Activated CD8-positive, alpha-beta T cell treated with anti-CD3 and anti-CD28 coated beads, Interleukin-2, amount 10 ng/mL, durations not matched to agents 7 days and 5 days (primary cell): ENCODE measurements at regions of chr4 and their contacts with region 1.

Region 1: DNA sequence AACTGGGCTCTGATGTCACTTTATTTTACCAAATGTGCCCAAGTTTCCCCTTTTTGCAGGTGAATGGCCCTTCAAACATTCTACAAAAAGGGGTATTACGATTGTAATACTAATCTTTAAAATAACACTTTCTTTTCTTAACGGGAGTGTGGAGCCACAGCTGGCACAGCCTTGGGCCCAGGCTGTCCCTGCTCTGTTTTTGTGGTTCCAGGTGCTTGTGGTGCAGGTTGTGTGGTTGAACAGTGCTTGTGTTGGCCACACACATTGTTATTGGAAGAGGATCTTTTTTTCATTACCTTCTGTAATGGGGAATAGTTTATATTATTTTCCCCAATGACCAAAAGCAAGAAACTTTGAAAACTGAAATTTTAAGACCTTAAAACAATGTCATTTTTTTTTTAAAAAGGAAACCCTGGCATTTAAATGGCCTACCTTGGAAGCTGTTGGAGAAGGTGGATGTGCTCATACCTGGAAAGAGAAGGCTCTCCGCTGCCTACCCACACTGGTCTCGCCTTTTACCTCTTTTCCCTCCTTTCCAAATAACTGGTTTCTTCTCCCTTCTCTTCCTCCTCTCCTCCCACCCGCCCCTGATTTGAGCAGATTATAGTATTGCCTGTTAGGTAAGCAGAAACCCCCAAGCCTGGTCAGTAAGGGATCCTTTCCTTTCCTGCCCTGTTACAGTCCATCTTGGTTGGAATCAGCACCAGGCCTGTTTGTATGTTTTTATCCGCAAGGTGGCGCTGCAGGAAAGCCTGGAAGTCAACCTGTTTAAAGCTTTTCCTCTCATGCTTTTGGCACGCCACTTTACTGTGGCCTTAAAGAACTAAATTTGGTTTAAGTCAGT is 28.6 kb downstream of the HADH start:
- DNase-seq: peak; percentile 90
- ATAC-seq: peak; percentile 68
- H3K4me3 Mint-ChIP-seq: no peak overlapping the region
- H3K27ac Mint-ChIP-seq: peak overlapping the region; percentile 58
- H3K4me1 Mint-ChIP-seq: peaks cover 33% of the 10 kb centered on the region
- H3K27me3 Mint-ChIP-seq: no peaks in the 10 kb centered on the region

Region 2: GRCh38 chr4:107939307-107939706 is 79.0 kb before region 1 on chr4:
- CTCF ChIA-PET with region 1: no interaction called
- POLR2A ChIA-PET with region 1: no interaction called
- DNase-seq: no peak
- ATAC-seq: no peak
- H3K4me3 Mint-ChIP-seq: no peak overlapping the region
- H3K27ac Mint-ChIP-seq: no peak overlapping the region
- H3K4me1 Mint-ChIP-seq: peaks cover 7% of the 10 kb centered on the region
- H3K27me3 Mint-ChIP-seq: no peaks in the 10 kb centered on the region

Region 3: DNA sequence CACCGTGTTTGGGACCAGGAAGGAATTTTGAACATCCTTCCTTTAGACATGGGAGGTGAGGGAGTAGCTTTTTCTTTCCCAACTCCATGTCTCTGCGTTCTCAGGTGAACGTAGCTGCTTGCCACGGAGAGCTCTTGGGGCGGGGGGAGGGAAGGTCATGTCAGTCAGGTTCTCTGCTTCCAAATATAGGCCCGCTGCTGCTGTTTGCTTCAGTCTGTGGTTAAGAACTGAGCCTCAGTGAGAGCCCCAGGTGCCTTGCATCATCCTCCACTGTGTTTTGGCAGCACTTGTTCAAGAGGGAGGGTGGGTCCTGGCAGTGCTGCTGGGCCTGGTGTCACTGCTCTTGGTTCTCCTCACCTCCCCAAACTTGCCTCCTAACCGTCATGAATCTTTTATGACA is 18.0 kb after region 1 on chr4:
- CTCF ChIA-PET with region 1: interaction called, 72 read pairs
- POLR2A ChIA-PET with region 1: interaction called, 4 read pairs
- DNase-seq: peak; percentile 84
- ATAC-seq: peak; percentile 92
- H3K4me3 Mint-ChIP-seq: peak overlapping the region; percentile 62
- H3K27ac Mint-ChIP-seq: peak overlapping the region; percentile 96
- H3K4me1 Mint-ChIP-seq: peaks cover 55% of the 10 kb centered on the region
- H3K27me3 Mint-ChIP-seq: no peaks in the 10 kb centered on the region

Region 4: DNA sequence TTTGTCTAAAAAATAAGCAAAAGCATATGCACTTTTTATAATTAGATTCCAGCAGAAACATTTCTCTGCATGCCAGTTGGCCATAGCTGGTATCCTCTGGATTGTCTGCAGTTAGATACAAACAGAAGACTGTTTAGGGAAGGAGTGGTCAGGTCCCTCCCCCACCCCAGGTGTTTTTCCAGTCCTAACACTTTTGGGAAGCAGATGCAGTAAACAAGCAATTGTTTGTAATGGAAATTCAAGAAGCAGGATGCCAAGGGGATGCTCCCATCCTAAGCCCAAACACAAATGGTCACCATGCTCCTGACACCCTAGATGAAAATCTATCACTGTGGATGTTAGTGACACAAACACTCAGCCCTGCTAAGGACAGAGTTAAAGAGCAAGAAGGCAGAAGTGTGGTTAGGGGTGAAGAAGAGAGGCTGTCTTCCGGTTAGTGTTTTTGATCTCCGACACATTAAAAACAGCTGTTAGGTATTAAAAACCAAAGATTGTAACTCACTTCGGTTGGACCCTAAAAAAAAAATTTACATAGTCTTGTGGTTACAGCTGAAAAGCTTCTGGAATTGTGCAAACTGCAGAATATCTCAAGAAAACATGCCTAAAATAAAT is 142.6 kb after region 1 on chr4:
- CTCF ChIA-PET with region 1: interaction called, 31 read pairs
- POLR2A ChIA-PET with region 1: no interaction called
- DNase-seq: no peak
- ATAC-seq: peak; percentile 62
- H3K4me3 Mint-ChIP-seq: peak overlapping the region; percentile 80
- H3K27ac Mint-ChIP-seq: peak overlapping the region; percentile 43
- H3K4me1 Mint-ChIP-seq: peaks cover 61% of the 10 kb centered on the region
- H3K27me3 Mint-ChIP-seq: no peaks in the 10 kb centered on the region

Region 5: GRCh38 chr4:108581083-108581482 is 562.8 kb after region 1 on chr4:
- CTCF ChIA-PET with region 1: interaction called, 15 read pairs
- POLR2A ChIA-PET with region 1: no interaction called
- DNase-seq: no peak
- ATAC-seq: no peak
- H3K4me3 Mint-ChIP-seq: no peak overlapping the region
- H3K27ac Mint-ChIP-seq: no peak overlapping the region
- H3K4me1 Mint-ChIP-seq: peaks cover 6% of the 10 kb centered on the region
- H3K27me3 Mint-ChIP-seq: no peaks in the 10 kb centered on the region

Region 6: GRCh38 chr4:108650212-108651013 is 632.2 kb after region 1 on chr4 and contains the start of gene OSTC:
- CTCF ChIA-PET with region 1: interaction called, 14 read pairs
- POLR2A ChIA-PET with region 1: no interaction called
- DNase-seq: peak; percentile 94
- ATAC-seq: peak; percentile 91
- H3K4me3 Mint-ChIP-seq: peak within 1 kb of the TSS; percentile 95
- H3K27ac Mint-ChIP-seq: peak within 1 kb of the TSS; percentile 91
- H3K4me1 Mint-ChIP-seq: peaks cover 25% of the 10 kb centered on the region
- H3K27me3 Mint-ChIP-seq: no peaks in the 10 kb centered on the region
- total RNA-seq, gene OSTC: 72.1 to 81.6 TPM